Left colon (tissue), 2 donors: ENCODE measurements at regions of chr14 and their contacts with region 1.

Region 1: GRCh38 chr14:80055667-80056496 is 155.4 kb downstream of the DIO2 start:
- DNase-seq: peak in 1 of 2 donors; percentile 4
- ATAC-seq: peak; percentile 46

Region 2: GRCh38 chr14:80850197-80850814 is 794.4 kb after region 1 on chr14:
- intact Hi-C with region 1: loop called in 1 of 2 experiments (anchors 10 kb)
- DNase-seq: no peak
- ATAC-seq: peak; percentile 41